ENCODE measurements at regions of chr4 and their contacts with region 1.

Region 1: DNA sequence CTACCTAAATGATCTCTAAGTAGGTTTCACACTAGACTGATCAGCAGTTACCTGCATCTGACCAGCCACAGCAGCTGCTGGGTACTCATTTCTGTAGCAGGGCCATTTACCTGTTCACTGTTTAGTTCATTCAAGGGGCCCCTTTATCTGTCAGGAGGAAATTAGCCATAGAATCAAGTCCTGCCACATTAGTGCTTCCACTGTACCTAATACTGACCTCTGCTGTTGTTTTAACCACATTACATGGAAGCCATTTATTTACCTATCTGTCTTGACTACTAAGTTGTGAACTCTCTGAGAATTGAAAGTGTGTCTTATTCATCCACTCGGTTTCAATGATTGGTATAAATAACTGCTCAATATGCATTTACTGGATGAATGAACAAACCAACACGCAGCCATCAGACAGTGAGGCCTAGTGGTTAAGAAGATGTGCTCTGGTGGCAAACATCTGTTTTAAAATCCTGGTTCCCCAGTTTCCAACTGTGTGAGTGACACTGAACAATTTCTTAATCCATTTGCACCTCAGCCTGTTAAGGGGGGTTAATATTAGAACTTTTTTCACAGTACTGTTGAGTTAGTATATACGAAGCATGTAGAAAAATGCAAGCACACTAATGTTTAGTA is 30.0 kb upstream of the ANXA5 start:
- DNase-seq: peak in 6 of 9 donors; percentile 3 to 50 (median 32)
- ATAC-seq: peak; percentile 93
- H3K4me3 ChIP-seq: no peak overlapping the region
- H3K4me3 Mint-ChIP-seq: no peak overlapping the region
- H3K27ac ChIP-seq: no peak overlapping the region
- H3K27ac Mint-ChIP-seq: no peak overlapping the region
- H3K4me1 ChIP-seq: no peaks in the 10 kb centered on the region
- H3K4me1 Mint-ChIP-seq: peaks cover 0 to 4% (median 0%) of the 10 kb centered on the region in 7 donors
- H3K27me3 ChIP-seq: no peaks in the 10 kb centered on the region
- H3K27me3 Mint-ChIP-seq: peaks cover 0 to 10% (median 5%) of the 10 kb centered on the region in 5 donors

Region 2: GRCh38 chr4:121370729-121371325 is 355.9 kb before region 1 on chr4:
- CTCF ChIA-PET with region 1: interaction called, 3 read pairs
- POLR2A ChIA-PET with region 1: no interaction called
- intact Hi-C with region 1: loop called in 1 of 2 experiments (anchors 2 kb)
- DNase-seq: peak in 4 of 9 donors; percentile 5 to 23 (median 10)
- ATAC-seq: no peak
- H3K4me3 ChIP-seq: no peak overlapping the region
- H3K4me3 Mint-ChIP-seq: no peak overlapping the region
- H3K27ac ChIP-seq: no peak overlapping the region
- H3K27ac Mint-ChIP-seq: no peak overlapping the region
- H3K4me1 ChIP-seq: no peaks in the 10 kb centered on the region
- H3K4me1 Mint-ChIP-seq: no peaks in the 10 kb centered on the region
- H3K27me3 ChIP-seq: peaks cover 0 to 3% of the 10 kb centered on the region in 2 donors
- H3K27me3 Mint-ChIP-seq: peaks cover 9 to 30% (median 17%) of the 10 kb centered on the region in 5 donors

Region 3: DNA sequence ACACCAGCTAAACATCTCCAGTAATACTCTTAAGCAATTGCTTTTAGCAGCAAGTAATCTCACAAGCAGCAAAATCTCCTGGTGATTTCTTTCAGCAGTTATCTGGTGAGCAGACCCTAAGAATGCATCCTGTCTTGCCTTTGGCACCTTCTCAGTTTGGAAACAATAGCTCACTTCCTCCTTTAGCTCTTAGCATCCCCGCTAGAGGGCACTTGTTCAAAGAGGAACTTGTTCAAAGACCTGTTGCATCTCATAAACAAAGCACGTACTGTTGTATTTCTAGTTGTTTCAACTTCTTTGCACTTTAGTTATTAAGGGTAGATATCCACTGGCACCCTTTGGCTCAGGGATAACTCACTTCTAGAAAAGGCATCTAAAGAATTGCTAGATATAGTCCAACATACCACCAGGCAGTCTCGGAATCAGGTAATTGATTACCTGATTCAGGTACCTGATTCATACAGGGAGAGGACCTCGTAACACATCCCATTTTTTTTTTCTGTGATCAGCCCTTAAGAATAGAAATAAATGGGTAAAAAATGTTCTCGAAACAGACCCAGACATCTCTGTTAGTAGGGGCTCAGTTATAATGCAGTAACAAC is 264.0 kb before region 1 on chr4:
- CTCF ChIA-PET with region 1: no interaction called
- POLR2A ChIA-PET with region 1: no interaction called
- intact Hi-C with region 1: loop called (anchors 1 kb)
- DNase-seq: peak in 7 of 9 donors; percentile 15 to 49 (median 37)
- ATAC-seq: peak; percentile 76
- H3K4me3 ChIP-seq: no peak overlapping the region
- H3K4me3 Mint-ChIP-seq: no peak overlapping the region
- H3K27ac ChIP-seq: no peak overlapping the region
- H3K27ac Mint-ChIP-seq: no peak overlapping the region
- H3K4me1 ChIP-seq: no peaks in the 10 kb centered on the region
- H3K4me1 Mint-ChIP-seq: peaks cover 0 to 3% (median 0%) of the 10 kb centered on the region in 7 donors
- H3K27me3 ChIP-seq: no peaks in the 10 kb centered on the region
- H3K27me3 Mint-ChIP-seq: peaks cover 32 to 39% (median 33%) of the 10 kb centered on the region in 5 donors

Region 4: DNA sequence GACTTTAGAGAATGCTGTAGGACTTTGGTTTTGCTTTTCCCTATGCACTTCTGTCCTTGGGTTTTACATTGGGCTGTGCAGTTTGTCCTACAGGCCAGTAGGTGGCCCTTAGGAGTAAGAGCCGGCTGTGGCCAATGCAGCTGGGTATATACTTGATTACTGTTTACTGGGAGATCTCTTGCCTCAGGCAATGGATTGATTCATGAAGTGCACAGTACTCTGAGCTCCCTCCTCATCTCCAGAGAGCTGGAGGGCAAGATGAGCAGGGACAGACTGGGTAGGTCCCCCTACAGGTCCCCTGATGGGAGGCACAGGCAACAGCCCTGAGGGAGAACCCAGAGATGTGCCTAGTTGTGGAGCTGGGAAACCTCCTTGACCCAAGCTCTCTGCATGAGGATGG is 242.1 kb before region 1 on chr4:
- CTCF ChIA-PET with region 1: no interaction called
- POLR2A ChIA-PET with region 1: no interaction called
- intact Hi-C with region 1: loop called (anchors 1 to 2 kb)
- DNase-seq: peak in 1 of 9 donors; percentile 10
- ATAC-seq: peak; percentile 60
- H3K4me3 ChIP-seq: no peak overlapping the region
- H3K4me3 Mint-ChIP-seq: no peak overlapping the region
- H3K27ac ChIP-seq: no peak overlapping the region
- H3K27ac Mint-ChIP-seq: no peak overlapping the region
- H3K4me1 ChIP-seq: no peaks in the 10 kb centered on the region
- H3K4me1 Mint-ChIP-seq: no peaks in the 10 kb centered on the region
- H3K27me3 ChIP-seq: no peaks in the 10 kb centered on the region
- H3K27me3 Mint-ChIP-seq: peaks cover 22 to 41% (median 37%) of the 10 kb centered on the region in 5 donors

Region 5: DNA sequence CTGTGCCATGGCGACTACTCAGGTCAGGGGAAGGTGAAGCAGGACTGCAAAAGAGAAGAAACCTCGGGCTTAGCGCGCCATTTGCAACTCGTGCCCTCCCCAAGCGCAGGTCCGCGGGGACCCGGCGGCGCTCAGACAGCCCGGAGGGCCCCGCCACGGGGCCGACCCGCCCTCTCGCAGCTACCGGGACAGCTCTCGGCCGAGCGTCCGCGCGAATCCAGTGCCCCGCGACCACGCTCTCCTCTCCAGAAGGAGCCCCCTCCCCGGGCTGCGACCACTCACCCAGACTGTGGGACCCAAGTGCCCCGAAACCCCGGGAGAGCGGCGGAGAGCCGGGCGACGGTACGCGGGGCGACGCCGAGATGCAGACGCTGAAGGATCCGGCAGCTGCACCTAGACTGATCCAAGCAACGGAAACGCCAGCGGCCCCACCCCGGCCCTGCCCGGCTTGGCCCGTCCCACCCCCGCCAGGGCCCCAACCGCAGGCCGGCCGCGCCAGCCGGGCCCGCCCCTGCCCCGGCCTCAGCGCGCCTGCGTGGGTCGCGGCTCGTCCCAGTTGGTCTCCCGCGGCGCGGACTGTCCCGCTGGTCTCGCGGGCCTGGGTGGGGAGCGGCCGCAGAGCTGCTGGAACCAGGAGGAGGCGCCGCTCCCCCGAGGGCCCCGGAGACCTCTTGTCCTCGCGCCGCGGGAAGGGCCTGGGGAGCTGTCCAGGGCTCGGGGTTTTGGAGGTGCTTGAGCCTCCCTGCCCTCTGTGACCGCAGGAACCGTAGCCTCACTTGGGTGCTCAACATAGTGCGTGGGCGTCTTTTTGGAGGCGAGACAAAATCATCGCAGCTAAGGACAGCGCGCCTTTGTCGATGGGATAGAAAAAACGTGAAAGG is 29.9 kb before region 1 on chr4 and contains the start of gene ANXA5:
- CTCF ChIA-PET with region 1: no interaction called
- POLR2A ChIA-PET with region 1: no interaction called
- intact Hi-C with region 1: loop called (anchors 1 to 2 kb)
- DNase-seq: peak; percentile 8 to 85 (median 41)
- ATAC-seq: peak; percentile 92
- H3K4me3 ChIP-seq: peak within 1 kb of the TSS; percentile 87
- H3K4me3 Mint-ChIP-seq: peak within 1 kb of the TSS; percentile 94 to 99 (median 97)
- H3K27ac ChIP-seq: peak within 1 kb of the TSS; percentile 39
- H3K27ac Mint-ChIP-seq: peak within 1 kb of the TSS; percentile 67 to 99 (median 87)
- H3K4me1 ChIP-seq: peaks cover 4 to 13% of the 10 kb centered on the region in 2 donors
- H3K4me1 Mint-ChIP-seq: peaks cover 12 to 43% (median 19%) of the 10 kb centered on the region in 7 donors
- H3K27me3 ChIP-seq: no peaks in the 10 kb centered on the region
- H3K27me3 Mint-ChIP-seq: peaks cover 0 to 43% (median 28%) of the 10 kb centered on the region in 5 donors
- total RNA-seq, gene ANXA5: 25.5 to 180 (median 49.5) TPM

Region 6: GRCh38 chr4:121706595-121707021 is 20.1 kb before region 1 on chr4:
- CTCF ChIA-PET with region 1: no interaction called
- POLR2A ChIA-PET with region 1: no interaction called
- intact Hi-C with region 1: loop called in 1 of 2 experiments (anchors 2 kb)
- DNase-seq: peak in 1 of 9 donors; percentile 68
- ATAC-seq: peak; percentile 87
- H3K4me3 ChIP-seq: no peak overlapping the region
- H3K4me3 Mint-ChIP-seq: peak overlapping the region in 2 of 10 donors; percentile 23 to 26
- H3K27ac ChIP-seq: no peak overlapping the region
- H3K27ac Mint-ChIP-seq: peak overlapping the region in 2 of 9 donors; percentile 28 to 53
- H3K4me1 ChIP-seq: peaks cover 0 to 7% of the 10 kb centered on the region in 2 donors
- H3K4me1 Mint-ChIP-seq: peaks cover 0 to 28% (median 1%) of the 10 kb centered on the region in 7 donors
- H3K27me3 ChIP-seq: no peaks in the 10 kb centered on the region
- H3K27me3 Mint-ChIP-seq: peaks cover 28 to 46% (median 31%) of the 10 kb centered on the region in 5 donors

Region 7: DNA sequence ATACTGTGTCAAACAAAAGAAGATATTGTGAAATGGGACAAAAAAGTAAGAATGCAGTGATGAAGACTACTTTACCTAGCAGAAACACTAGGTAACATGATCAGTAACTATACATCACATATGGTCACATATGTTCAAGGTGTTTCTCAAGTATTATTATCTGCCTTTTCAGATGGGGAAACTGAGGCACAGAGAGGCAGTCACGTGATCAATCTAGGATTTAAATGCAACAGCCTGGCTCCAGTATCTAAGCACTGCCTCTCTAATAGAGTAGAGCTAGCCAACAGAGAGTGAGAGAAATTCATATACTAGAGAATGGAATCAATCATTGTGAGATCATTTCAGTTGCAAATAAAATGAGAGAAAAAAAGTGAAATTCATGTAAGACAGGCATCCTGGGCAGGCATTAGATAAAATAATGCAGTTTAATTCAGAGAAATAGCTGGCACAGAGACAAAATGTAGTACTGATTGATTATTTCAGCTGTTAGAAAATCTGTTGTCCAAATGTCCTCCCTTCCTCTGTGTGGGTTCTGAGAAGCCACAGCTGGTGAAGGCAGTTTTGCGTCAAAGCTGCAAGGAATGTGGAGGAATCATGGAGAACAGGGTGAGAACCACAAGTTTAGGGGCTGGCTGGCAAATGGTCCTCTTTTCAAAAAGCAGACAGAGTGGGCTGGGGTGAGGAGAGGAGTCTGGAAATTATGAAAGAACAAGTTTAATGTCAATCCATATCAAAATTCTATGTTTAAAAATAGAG is 12.2 kb after region 1 on chr4:
- CTCF ChIA-PET with region 1: no interaction called
- POLR2A ChIA-PET with region 1: no interaction called
- intact Hi-C with region 1: no loop called
- DNase-seq: no peak
- ATAC-seq: no peak
- H3K4me3 ChIP-seq: no peak overlapping the region
- H3K4me3 Mint-ChIP-seq: no peak overlapping the region
- H3K27ac ChIP-seq: no peak overlapping the region
- H3K27ac Mint-ChIP-seq: no peak overlapping the region
- H3K4me1 ChIP-seq: no peaks in the 10 kb centered on the region
- H3K4me1 Mint-ChIP-seq: no peaks in the 10 kb centered on the region
- H3K27me3 ChIP-seq: no peaks in the 10 kb centered on the region
- H3K27me3 Mint-ChIP-seq: peaks cover 4 to 17% (median 8%) of the 10 kb centered on the region in 5 donors